ENCODE measurements at regions of chr5 and their contacts with region 1.

Region 1: GRCh38 chr5:150486402-150487198 is 21.3 kb upstream of the NDST1 start:
- DNase-seq: peak in 1 of 2 donors; percentile 79
- H3K4me3 ChIP-seq: peak overlapping the region; percentile 84 to 96
- H3K27ac ChIP-seq: peak overlapping the region; percentile 92 to 96
- H3K4me1 ChIP-seq: peaks cover 11 to 59% (median 52%) of the 10 kb centered on the region in 4 donors
- H3K27me3 ChIP-seq: no peaks in the 10 kb centered on the region
- CTCF ChIP-seq: peak in 1 of 2 experiments; percentile 13

Region 2: GRCh38 chr5:150036513-150036912 is 450.1 kb before region 1 on chr5:
- intact Hi-C with region 1: no loop called
- DNase-seq: no peak
- H3K4me3 ChIP-seq: no peak overlapping the region
- H3K27ac ChIP-seq: no peak overlapping the region
- H3K4me1 ChIP-seq: no peaks in the 10 kb centered on the region
- H3K27me3 ChIP-seq: no peaks in the 10 kb centered on the region
- CTCF ChIP-seq: no peak

Region 3: GRCh38 chr5:150407096-150407720 is 79.4 kb before region 1 on chr5:
- intact Hi-C with region 1: no loop called
- DNase-seq: no peak
- H3K4me3 ChIP-seq: no peak overlapping the region
- H3K27ac ChIP-seq: no peak overlapping the region
- H3K4me1 ChIP-seq: peaks cover 0 to 14% (median 9%) of the 10 kb centered on the region in 4 donors
- H3K27me3 ChIP-seq: no peaks in the 10 kb centered on the region
- CTCF ChIP-seq: no peak

Region 4: DNA sequence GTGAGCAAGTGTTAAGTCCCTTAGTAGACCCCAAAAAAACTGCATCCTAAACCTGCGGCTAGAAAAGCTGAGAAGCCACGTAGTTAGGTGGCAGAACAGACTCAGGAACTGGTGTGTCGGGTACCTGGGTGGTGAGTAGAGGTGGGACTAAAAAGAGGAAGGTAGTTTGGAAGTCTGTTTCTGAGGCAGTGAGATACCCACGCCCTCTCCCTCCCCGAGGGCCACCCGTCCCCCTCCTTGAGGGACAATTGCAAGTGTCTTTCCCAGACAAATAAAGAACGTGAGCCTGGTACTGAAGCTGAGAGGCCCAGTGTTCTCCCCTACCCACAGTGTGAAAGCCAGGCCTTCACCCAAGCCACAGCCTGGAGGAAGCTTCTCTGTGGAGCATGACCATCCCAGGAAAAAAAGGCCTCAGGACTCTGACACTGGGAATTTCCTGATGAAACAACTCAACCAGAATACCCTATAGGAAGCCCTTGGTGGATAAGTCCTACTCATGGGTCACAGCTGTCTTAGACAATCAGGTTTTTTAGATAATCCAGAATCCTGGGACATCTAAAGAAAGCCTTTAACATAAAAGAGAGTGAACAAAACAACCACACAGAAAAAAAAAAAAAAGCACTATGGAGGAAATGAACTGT is 66.8 kb before region 1 on chr5:
- intact Hi-C with region 1: no loop called
- DNase-seq: no peak
- H3K4me3 ChIP-seq: no peak overlapping the region
- H3K27ac ChIP-seq: no peak overlapping the region
- H3K4me1 ChIP-seq: no peaks in the 10 kb centered on the region
- H3K27me3 ChIP-seq: no peaks in the 10 kb centered on the region
- CTCF ChIP-seq: no peak

Region 5: DNA sequence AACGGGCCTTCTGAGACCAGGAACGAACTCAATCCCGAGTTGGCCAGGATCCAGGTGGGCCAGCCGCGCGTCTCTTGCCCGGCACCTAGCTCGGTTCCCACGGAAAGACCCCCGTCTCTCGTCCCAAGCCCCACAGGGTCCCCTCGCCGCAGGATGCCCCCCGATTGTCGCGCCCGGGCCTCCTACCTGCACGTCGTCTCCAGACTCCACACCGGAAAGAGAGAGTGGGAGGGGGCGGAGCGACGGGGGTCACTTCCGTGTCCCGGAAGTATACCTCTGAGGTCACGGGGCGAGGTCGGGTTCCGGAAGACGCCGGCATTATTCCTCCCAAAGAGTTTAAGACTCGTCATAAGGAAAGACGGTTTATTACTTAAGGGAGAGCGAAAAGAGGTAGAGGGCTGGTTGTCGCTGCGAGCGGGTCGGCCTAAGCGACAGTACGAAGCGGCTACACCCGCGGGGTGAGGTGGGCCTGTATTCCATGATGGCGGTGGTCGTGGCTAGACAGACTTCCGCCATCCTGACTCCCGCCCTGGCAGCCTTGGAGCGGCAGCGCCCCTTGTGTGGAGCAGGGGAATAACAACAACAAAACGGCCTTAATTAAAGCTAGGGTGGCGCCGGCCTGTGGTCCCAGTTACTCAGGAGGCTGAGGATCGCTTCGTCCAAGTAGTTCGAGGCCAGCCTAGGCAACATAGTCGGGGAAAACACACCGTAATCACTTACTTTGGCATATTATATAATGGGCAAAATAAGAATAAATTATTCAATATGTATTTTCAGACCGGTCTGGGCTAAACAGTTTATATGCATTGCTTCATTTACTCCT is 36.9 kb before region 1 on chr5 and contains the start of gene RPS14:
- intact Hi-C with region 1: loop called (anchors 5 kb)
- DNase-seq: peak; percentile 94 to 96
- H3K4me3 ChIP-seq: peak within 1 kb of the TSS; percentile 68 to 69
- H3K27ac ChIP-seq: peak within 1 kb of the TSS; percentile 89 to 94
- H3K4me1 ChIP-seq: peaks cover 0 to 25% (median 14%) of the 10 kb centered on the region in 4 donors
- H3K27me3 ChIP-seq: no peaks in the 10 kb centered on the region
- CTCF ChIP-seq: peak; percentile 91 to 92

Region 6: DNA sequence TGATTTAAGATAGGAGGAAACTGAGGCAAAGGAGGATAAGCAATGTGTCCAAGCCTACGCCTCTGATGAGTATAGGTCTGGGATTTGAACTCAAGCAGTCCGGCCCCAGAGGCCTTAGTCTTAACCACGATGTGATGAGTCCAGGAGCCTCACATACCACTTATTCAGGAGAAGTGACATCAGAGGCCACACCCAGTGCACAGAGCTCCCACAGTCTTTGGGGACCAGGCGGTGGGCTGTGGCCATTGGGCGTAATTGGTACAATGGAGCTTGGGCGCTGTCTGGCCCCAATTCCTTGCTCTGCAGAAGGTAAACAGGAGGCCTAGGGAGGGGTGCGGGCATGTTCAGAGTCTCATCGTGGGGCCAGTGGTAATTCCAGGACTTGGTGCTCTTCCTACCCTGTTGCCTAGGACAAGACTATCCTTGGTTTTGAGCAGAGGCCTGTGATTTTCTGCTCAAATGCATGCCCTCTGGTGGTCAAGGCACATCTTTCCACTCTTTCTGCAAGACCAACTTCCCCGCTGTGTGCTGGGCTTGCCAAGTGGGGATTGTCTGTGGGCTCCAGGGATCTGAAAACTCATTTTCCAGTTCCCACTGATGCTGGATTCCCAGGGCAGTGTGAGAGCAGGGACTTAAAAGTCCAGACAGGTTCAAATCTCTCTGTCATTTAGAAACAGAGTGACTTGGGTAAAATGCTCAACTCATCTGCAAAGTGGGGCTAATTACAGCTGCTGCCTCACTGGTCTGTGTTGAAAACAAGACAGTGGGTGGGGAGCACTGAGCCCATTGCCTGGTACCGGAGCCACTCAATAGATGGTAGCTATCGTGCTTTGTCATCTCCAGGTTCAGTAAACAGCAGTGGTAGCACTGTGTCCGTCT is 37.1 kb after region 1 on chr5:
- intact Hi-C with region 1: loop called (anchors 5 kb)
- DNase-seq: peak in 1 of 2 donors; percentile 36
- H3K4me3 ChIP-seq: no peak overlapping the region
- H3K27ac ChIP-seq: peak overlapping the region in 1 of 2 donors; percentile 11
- H3K4me1 ChIP-seq: peaks cover 0 to 81% (median 58%) of the 10 kb centered on the region in 4 donors
- H3K27me3 ChIP-seq: no peaks in the 10 kb centered on the region
- CTCF ChIP-seq: peak; percentile 57 to 68

Region 7: DNA sequence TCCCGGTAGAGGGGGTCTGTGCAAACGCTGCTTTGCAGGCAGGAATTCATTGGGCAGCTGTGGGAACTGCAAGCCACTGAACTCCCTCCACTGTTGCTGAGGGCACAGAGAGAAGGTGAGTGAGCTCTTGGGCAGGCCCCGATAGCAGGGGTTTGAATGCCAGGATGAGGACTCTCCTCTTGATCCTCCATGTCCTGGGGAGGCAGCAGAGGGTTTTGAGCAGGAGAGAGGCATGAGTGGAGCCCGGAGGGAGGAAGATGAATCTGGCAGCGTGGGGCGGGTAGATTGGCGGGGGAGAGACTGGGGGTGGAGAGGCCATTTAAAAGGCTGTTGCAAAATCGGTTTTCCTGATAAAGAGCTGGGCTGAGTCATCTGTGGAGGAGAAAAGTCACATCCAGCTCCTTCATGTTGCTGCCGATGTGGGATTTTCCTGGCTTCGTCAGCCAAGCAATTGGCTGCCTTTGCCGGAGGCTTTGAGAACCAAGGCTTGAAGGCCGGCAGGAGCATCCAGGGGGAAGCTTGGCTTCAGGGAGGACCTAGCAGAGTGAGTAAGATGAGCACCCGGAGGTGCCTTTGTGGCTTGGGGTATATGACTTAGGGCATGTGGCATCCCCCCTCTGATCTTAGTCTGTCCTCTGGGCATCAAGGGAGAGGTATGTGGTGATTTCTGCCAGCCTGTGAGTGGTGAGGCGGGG is 153.9 kb after region 1 on chr5 and contains the start of gene SYNPO:
- intact Hi-C with region 1: loop called (anchors 10 kb)
- DNase-seq: peak; percentile 89 to 94
- H3K4me3 ChIP-seq: peak within 1 kb of the TSS; percentile 5 to 36
- H3K27ac ChIP-seq: peak within 1 kb of the TSS; percentile 83 to 86
- H3K4me1 ChIP-seq: peaks cover 7 to 100% (median 98%) of the 10 kb centered on the region in 4 donors
- H3K27me3 ChIP-seq: no peaks in the 10 kb centered on the region
- CTCF ChIP-seq: no peak

Measured in tibial artery (tissue), 4 donors.